K562 (cell line): ENCODE measurements at regions of chr17 and their contacts with region 1.

Region 1: DNA sequence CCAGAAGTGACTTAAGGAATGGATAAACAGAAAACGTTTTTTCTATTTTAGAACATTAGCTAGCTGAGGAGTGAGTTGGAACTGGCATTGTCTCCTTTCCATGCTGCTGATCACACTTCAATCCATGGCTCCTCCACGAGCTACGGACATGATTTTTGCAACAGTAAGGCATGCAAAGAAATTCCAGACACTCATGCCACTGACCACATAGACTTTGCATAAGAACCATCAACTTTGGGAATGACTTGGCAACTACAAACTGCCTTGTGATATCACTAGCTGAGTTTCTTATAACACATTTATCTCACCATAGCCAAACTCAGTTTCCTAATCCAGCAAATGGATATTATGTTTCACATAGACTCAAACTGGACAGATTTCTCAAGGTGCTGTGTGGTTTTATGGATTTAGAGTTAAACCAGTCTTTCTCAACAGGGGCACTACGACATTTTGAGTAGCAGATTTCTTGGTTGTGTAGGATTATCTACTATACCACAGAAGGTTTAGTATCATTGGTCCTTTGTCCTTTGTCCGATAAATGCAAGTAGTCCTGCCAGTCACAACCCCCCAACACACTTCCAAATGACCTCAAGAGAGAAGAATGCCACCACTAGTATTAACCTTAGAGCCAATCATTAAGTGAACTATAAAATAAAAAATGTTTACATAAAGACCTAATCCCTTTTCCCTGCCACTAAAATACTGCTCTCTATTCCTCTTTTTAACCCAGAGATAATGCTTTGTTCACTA is 48.3 kb upstream of the C17orf78 start:
- DNase-seq: no peak
- ATAC-seq: no peak
- H3K4me3 ChIP-seq: no peak overlapping the region
- H3K27ac ChIP-seq: no peak overlapping the region
- H3K4me1 ChIP-seq: no peaks in the 10 kb centered on the region
- H3K27me3 ChIP-seq: no peaks in the 10 kb centered on the region
- CTCF ChIP-seq: no peak
- EP300 ChIP-seq: no peak
- POLR2A ChIP-seq: no peak
- RAD21 ChIP-seq: no peak

Region 2: GRCh38 chr17:37107406-37108083 is 220.0 kb before region 1 on chr17:
- CTCF ChIA-PET with region 1: no interaction called
- POLR2A ChIA-PET with region 1: no interaction called
- in situ Hi-C with region 1: no loop called
- intact Hi-C with region 1: no loop called
- DNase-seq: no peak
- ATAC-seq: no peak
- H3K4me3 ChIP-seq: no peak overlapping the region
- H3K27ac ChIP-seq: no peak overlapping the region
- H3K4me1 ChIP-seq: no peaks in the 10 kb centered on the region
- H3K27me3 ChIP-seq: no peaks in the 10 kb centered on the region
- CTCF ChIP-seq: no peak
- EP300 ChIP-seq: no peak
- POLR2A ChIP-seq: no peak
- RAD21 ChIP-seq: no peak

Region 3: DNA sequence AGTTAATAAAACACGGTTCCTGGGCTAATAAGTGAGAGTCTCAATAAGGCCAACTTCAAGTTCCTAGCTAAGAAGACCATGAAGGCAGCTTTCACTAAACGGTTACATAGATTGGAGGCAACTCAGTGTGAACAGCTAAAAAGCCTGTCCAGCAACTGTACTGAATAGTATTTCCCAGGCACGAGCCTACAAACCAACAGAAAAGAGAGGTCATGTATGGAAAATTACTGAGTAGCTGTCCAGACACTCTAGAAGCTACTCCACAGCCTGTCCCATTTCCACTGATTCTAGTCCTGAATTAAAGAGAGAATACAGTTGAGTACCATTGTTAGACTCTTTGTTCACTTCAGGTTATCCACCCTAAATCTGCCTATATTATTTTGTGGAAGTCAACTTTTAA is 11.8 kb after region 1 on chr17:
- CTCF ChIA-PET with region 1: no interaction called
- POLR2A ChIA-PET with region 1: interaction called, 15 read pairs
- in situ Hi-C with region 1: no loop called
- intact Hi-C with region 1: no loop called
- DNase-seq: no peak
- ATAC-seq: no peak; the same call in 2 of the 3 replicates
- H3K4me3 ChIP-seq: no peak overlapping the region
- H3K27ac ChIP-seq: peak overlapping the region; percentile 6; the same call in 1 of the 3 replicates
- H3K4me1 ChIP-seq: no peaks in the 10 kb centered on the region; a peak in 1 of 5 replicates
- H3K27me3 ChIP-seq: no peaks in the 10 kb centered on the region
- CTCF ChIP-seq: no peak
- EP300 ChIP-seq: no peak
- POLR2A ChIP-seq: no peak
- RAD21 ChIP-seq: no peak